ENCODE measurements at regions of chr1 and their contacts with region 1.

Region 1: GRCh38 chr1:179002552-179003345 is 22.9 kb upstream of the FAM20B start:
- DNase-seq: peak; percentile 80 to 92 (median 88)
- H3K4me3 ChIP-seq: no peak overlapping the region
- H3K27ac ChIP-seq: peak overlapping the region in 1 of 2 donors; percentile 18
- H3K4me1 ChIP-seq: peaks cover 6% of the 10 kb centered on the region
- H3K27me3 ChIP-seq: no peaks in the 10 kb centered on the region
- CTCF ChIP-seq: peak; percentile 78 to 98 (median 95)
- EP300 ChIP-seq: no peak
- POLR2A ChIP-seq: no peak

Region 2: GRCh38 chr1:178542560-178543356 is 460.0 kb before region 1 on chr1:
- intact Hi-C with region 1: loop called (anchors 2 to 5 kb)
- DNase-seq: peak; percentile 81 to 95 (median 91)
- H3K4me3 ChIP-seq: peak overlapping the region; percentile 81
- H3K27ac ChIP-seq: peak overlapping the region in 1 of 2 donors; percentile 63
- H3K4me1 ChIP-seq: no peaks in the 10 kb centered on the region
- H3K27me3 ChIP-seq: no peaks in the 10 kb centered on the region
- CTCF ChIP-seq: peak; percentile 93 to 99 (median 93)
- EP300 ChIP-seq: no peak
- POLR2A ChIP-seq: no peak

Region 3: GRCh38 chr1:178774263-178774662 is 228.5 kb before region 1 on chr1:
- intact Hi-C with region 1: loop called in 3 of 4 experiments (anchors 2 to 10 kb)
- DNase-seq: no peak
- H3K4me3 ChIP-seq: no peak overlapping the region
- H3K27ac ChIP-seq: no peak overlapping the region
- H3K4me1 ChIP-seq: peaks cover 2% of the 10 kb centered on the region
- H3K27me3 ChIP-seq: no peaks in the 10 kb centered on the region
- CTCF ChIP-seq: peak; percentile 25 to 55 (median 47)
- EP300 ChIP-seq: no peak
- POLR2A ChIP-seq: no peak

Region 4: GRCh38 chr1:178810585-178810984 is 192.2 kb before region 1 on chr1:
- intact Hi-C with region 1: loop called (anchors 2 to 10 kb)
- DNase-seq: no peak
- H3K4me3 ChIP-seq: no peak overlapping the region
- H3K27ac ChIP-seq: no peak overlapping the region
- H3K4me1 ChIP-seq: no peaks in the 10 kb centered on the region
- H3K27me3 ChIP-seq: no peaks in the 10 kb centered on the region
- CTCF ChIP-seq: no peak
- EP300 ChIP-seq: no peak
- POLR2A ChIP-seq: no peak

Region 5: GRCh38 chr1:178818416-178818815 is 184.3 kb before region 1 on chr1:
- intact Hi-C with region 1: loop called (anchors 2 to 10 kb)
- DNase-seq: no peak
- H3K4me3 ChIP-seq: no peak overlapping the region
- H3K27ac ChIP-seq: no peak overlapping the region
- H3K4me1 ChIP-seq: no peaks in the 10 kb centered on the region
- H3K27me3 ChIP-seq: no peaks in the 10 kb centered on the region
- CTCF ChIP-seq: no peak
- EP300 ChIP-seq: no peak
- POLR2A ChIP-seq: no peak